Common myeloid progenitor, CD34-positive (primary cell): ENCODE measurements at regions of chr2 and their contacts with region 1.

Region 1: DNA sequence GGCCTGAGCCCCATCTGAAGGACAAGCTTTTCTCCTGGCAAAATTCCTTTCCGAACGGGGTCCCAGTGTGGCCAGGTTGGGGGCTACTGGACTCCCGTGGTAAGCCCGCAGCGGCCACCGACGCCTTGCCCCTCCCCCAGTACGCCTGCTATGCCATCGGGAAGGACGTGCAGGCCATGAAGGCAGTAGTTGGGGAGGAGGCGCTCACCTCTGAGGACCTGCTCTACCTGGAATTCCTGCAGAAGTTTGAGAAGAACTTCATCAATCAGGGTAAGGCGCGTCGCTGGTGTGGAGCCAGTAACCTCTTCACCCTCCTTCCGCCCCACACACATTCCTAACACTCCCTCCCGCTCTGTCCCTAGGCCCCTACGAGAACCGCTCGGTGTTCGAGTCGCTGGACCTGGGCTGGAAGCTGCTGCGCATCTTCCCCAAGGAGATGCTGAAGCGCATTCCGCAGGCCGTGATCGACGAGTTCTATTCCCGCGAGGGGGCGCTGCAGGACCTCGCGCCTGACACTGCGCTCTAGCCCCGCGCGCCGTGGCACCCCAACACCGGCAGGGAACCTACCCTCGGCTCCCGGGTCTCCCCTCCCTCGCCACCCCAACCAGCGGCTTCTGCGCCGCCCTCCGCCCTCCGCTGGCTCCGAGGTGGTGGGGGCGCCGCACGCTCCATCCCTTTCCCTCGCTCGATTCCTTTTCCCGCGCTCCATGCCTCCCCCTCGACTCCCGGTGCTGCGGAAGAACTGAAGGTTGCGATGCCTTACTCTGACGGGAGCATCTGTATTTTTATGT is 13.6 kb upstream of the ANKRD53 start:
- DNase-seq: peak; percentile 77 to 83 (median 82)
- H3K4me3 ChIP-seq: peak overlapping the region; percentile 32 to 77 (median 60)
- H3K27ac ChIP-seq: no peak overlapping the region
- H3K4me1 ChIP-seq: peaks cover 0 to 9% (median 8%) of the 10 kb centered on the region in 4 experiments
- H3K27me3 ChIP-seq: peaks cover 3 to 45% (median 17%) of the 10 kb centered on the region in 5 experiments

Region 2: GRCh38 chr2:70948337-70949003 is 16.3 kb before region 1 on chr2:
- CTCF ChIA-PET with region 1: interaction called, 64 read pairs
- POLR2A ChIA-PET with region 1: no interaction called
- DNase-seq: peak; percentile 70 to 79 (median 74)
- H3K4me3 ChIP-seq: peak overlapping the region in 4 of 7 experiments; percentile 33 to 65 (median 40)
- H3K27ac ChIP-seq: no peak overlapping the region
- H3K4me1 ChIP-seq: peaks cover 0 to 18% (median 9%) of the 10 kb centered on the region in 4 experiments
- H3K27me3 ChIP-seq: peaks cover 3 to 16% (median 11%) of the 10 kb centered on the region in 5 experiments

Region 3: DNA sequence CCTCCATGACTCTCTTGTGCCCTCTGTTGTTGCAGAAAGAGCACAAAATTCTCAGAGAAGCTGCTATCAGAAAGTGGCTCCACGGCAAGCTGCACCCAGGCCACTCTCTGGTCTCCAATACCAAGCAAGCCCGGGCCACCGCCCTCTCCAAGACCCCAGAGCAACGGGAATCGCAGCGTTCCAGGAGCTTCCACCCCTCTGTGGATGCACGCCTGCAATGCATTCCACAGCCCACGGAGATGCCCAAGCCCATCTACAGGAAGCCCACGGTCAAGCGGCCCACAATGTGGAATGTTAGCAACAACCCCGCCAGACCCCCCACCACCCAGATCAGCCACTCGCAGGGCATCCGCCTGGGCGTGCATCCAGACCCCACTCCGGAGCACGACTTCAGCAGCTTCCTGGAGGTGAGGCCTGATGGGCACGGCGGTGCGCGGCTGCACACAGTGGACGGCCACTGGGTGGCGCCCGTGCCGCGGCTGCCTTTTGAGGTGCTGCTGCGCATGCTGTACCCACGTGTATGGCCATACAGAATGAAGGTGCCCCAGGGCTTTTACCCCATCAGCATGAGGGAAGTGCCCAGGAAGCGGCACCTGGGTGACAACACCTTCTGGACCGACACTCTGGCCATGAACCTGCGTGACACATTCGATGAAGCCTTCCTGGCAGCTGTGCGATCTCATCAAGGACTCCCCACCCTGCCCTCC is 19.9 kb after region 1 on chr2:
- CTCF ChIA-PET with region 1: interaction called, 181 read pairs
- POLR2A ChIA-PET with region 1: no interaction called
- DNase-seq: peak; percentile 68 to 84 (median 84)
- H3K4me3 ChIP-seq: peak overlapping the region in 5 of 7 experiments; percentile 19 to 81 (median 65)
- H3K27ac ChIP-seq: no peak overlapping the region
- H3K4me1 ChIP-seq: peaks cover 0 to 16% (median 7%) of the 10 kb centered on the region in 4 experiments
- H3K27me3 ChIP-seq: no peaks in the 10 kb centered on the region

Region 4: GRCh38 chr2:71000780-71001591 is 36.2 kb after region 1 on chr2:
- CTCF ChIA-PET with region 1: interaction called, 12 read pairs
- POLR2A ChIA-PET with region 1: no interaction called
- DNase-seq: peak; percentile 66 to 81 (median 78)
- H3K4me3 ChIP-seq: peak overlapping the region in 6 of 7 experiments; percentile 44 to 77 (median 51)
- H3K27ac ChIP-seq: no peak overlapping the region
- H3K4me1 ChIP-seq: peaks cover 0 to 12% (median 6%) of the 10 kb centered on the region in 4 experiments
- H3K27me3 ChIP-seq: peaks cover 0 to 4% (median 0%) of the 10 kb centered on the region in 5 experiments

Region 5: GRCh38 chr2:71018625-71019024 is 53.8 kb after region 1 on chr2:
- CTCF ChIA-PET with region 1: no interaction called
- POLR2A ChIA-PET with region 1: no interaction called
- DNase-seq: no peak
- H3K4me3 ChIP-seq: no peak overlapping the region
- H3K27ac ChIP-seq: no peak overlapping the region
- H3K4me1 ChIP-seq: no peaks in the 10 kb centered on the region
- H3K27me3 ChIP-seq: no peaks in the 10 kb centered on the region